GM18951 (cell line): ENCODE measurements at regions of chr7 and their contacts with region 1.

Region 1: GRCh38 chr7:65216459-65216858 is 157.2 kb upstream of the ZNF92 start:
- POLR2A ChIP-seq: no peak

Region 2: GRCh38 chr7:65438598-65438997 is 222.1 kb after region 1 on chr7:
- in situ Hi-C with region 1: no loop called
- POLR2A ChIP-seq: no peak

Region 3: DNA sequence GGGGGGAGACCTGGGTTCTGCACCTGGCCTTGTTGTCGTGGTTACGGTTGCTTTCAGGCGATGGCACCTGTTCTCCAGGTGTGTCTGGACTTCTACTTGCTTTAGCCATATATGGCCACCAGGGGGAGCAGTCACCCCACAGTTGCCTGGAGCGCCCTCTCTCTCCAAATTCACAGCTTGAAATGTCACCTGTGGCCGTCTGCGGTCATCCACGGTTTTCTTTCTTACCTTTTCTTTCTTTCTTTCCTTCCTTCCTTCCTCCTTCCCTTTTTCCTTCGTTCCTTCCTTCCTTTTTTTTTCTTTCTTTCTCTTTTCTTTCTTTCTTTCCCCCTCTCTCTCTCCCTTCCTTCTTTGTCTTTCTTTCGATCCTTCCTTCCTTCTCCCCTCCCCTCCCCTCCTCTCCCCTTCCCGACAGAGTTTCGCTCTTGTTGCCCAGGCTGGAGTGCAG is 505.9 kb after region 1 on chr7:
- in situ Hi-C with region 1: loop called (anchors 10 kb)
- POLR2A ChIP-seq: no peak